ENCODE measurements at regions of chr5 and their contacts with region 1.

Region 1: DNA sequence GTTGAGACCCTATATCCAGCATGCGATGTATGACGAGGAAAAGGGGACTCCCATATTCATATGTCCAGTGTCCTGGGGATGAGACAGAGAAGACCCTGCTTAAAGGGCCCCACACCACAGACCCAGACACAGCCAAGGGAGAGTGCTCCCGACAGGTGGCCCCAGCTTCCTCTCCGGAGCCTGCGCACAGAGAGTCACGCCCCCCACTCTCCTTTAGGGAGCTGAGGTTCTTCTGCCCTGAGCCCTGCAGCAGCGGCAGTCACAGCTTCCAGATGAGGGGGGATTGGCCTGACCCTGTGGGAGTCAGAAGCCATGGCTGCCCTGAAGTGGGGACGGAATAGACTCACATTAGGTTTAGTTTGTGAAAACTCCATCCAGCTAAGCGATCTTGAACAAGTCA is 17.1 kb downstream of the BTNL3 start:
- DNase-seq: no peak
- H3K4me3 ChIP-seq: no peak overlapping the region
- H3K27ac ChIP-seq: no peak overlapping the region
- H3K4me1 ChIP-seq: no peaks in the 10 kb centered on the region
- H3K27me3 ChIP-seq: no peaks in the 10 kb centered on the region
- CTCF ChIP-seq: no peak

Region 2: DNA sequence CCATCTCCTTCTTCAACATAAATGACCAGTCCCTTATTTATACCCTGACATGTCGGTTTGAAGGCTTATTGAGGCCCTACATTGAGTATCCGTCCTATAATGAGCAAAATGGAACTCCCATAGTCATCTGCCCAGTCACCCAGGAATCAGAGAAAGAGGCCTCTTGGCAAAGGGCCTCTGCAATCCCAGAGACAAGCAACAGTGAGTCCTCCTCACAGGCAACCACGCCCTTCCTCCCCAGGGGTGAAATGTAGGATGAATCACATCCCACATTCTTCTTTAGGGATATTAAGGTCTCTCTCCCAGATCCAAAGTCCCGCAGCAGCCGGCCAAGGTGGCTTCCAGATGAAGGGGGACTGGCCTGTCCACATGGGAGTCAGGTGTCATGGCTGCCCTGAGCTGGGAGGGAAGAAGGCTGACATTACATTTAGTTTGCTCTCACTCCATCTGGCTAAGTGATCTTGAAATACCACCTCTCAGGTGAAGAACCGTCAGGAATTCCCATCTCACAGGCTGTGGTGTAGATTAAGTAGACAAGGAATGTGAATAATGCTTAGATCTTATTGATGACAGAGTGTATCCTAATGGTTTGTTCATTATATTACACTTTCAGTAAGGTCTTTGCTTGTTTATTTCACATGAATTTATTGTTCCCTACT is 55.4 kb before region 1 on chr5:
- intact Hi-C with region 1: loop called (anchors 5 kb)
- DNase-seq: no peak
- H3K4me3 ChIP-seq: no peak overlapping the region
- H3K27ac ChIP-seq: no peak overlapping the region
- H3K4me1 ChIP-seq: no peaks in the 10 kb centered on the region
- H3K27me3 ChIP-seq: no peaks in the 10 kb centered on the region
- CTCF ChIP-seq: no peak

Measured in kidney (tissue), 22 donors.